Caco-2 (cell line): ENCODE measurements at regions of chr6 and their contacts with region 1.

Region 1: GRCh38 chr6:83958241-83958685 is 75.3 kb upstream of the MRAP2 start:
- DNase-seq: peak in 1 of 2 experiments; percentile 5
- H3K4me3 ChIP-seq: no peak overlapping the region
- H3K4me3 Mint-ChIP-seq: no peak overlapping the region
- H3K27ac Mint-ChIP-seq: no peak overlapping the region
- H3K4me1 ChIP-seq: peaks cover 31% of the 10 kb centered on the region
- H3K4me1 Mint-ChIP-seq: peaks cover 13% of the 10 kb centered on the region
- H3K27me3 ChIP-seq: no peaks in the 10 kb centered on the region
- H3K27me3 Mint-ChIP-seq: no peaks in the 10 kb centered on the region
- CTCF ChIP-seq: no peak

Region 2: GRCh38 chr6:83974409-83975050 is 16.3 kb after region 1 on chr6:
- CTCF ChIA-PET with region 1: no interaction called
- POLR2A ChIA-PET with region 1: no interaction called
- intact Hi-C with region 1: no loop called
- DNase-seq: peak; percentile 15 to 43
- H3K4me3 ChIP-seq: no peak overlapping the region
- H3K4me3 Mint-ChIP-seq: peak overlapping the region; percentile 53
- H3K27ac Mint-ChIP-seq: no peak overlapping the region
- H3K4me1 ChIP-seq: peaks cover 22% of the 10 kb centered on the region
- H3K4me1 Mint-ChIP-seq: peaks cover 20% of the 10 kb centered on the region
- H3K27me3 ChIP-seq: no peaks in the 10 kb centered on the region
- H3K27me3 Mint-ChIP-seq: no peaks in the 10 kb centered on the region
- CTCF ChIP-seq: no peak

Region 3: DNA sequence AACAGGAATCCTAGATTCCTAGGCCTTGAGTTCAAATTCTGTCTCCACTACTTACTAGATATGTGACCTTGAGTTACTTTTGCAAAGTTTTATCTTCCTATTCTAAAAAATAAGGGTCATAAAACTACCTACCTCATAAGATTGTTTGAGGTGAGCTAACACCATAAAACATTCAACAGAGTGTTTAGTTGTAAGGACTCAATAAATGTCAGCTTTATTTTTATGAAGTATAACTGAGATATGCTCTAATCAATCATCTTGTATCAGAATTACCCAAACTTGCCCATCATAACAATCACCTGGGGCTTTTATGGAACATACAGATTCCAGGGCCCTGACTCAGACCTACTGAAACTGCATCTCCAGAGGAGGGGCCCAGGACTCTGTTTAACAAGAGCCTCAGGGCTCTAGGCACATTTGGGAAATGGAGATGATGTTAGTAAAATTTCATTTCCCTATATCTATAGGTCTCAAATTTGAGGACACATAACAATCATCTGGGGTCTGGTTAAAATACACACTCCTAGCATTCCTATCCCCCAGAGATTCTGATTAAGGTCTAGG is 39.8 kb after region 1 on chr6:
- CTCF ChIA-PET with region 1: no interaction called
- POLR2A ChIA-PET with region 1: no interaction called
- intact Hi-C with region 1: no loop called
- DNase-seq: no peak
- H3K4me3 ChIP-seq: no peak overlapping the region
- H3K4me3 Mint-ChIP-seq: no peak overlapping the region
- H3K27ac Mint-ChIP-seq: no peak overlapping the region
- H3K4me1 ChIP-seq: no peaks in the 10 kb centered on the region
- H3K4me1 Mint-ChIP-seq: no peaks in the 10 kb centered on the region
- H3K27me3 ChIP-seq: no peaks in the 10 kb centered on the region
- H3K27me3 Mint-ChIP-seq: peaks cover 6% of the 10 kb centered on the region
- CTCF ChIP-seq: no peak

Region 4: DNA sequence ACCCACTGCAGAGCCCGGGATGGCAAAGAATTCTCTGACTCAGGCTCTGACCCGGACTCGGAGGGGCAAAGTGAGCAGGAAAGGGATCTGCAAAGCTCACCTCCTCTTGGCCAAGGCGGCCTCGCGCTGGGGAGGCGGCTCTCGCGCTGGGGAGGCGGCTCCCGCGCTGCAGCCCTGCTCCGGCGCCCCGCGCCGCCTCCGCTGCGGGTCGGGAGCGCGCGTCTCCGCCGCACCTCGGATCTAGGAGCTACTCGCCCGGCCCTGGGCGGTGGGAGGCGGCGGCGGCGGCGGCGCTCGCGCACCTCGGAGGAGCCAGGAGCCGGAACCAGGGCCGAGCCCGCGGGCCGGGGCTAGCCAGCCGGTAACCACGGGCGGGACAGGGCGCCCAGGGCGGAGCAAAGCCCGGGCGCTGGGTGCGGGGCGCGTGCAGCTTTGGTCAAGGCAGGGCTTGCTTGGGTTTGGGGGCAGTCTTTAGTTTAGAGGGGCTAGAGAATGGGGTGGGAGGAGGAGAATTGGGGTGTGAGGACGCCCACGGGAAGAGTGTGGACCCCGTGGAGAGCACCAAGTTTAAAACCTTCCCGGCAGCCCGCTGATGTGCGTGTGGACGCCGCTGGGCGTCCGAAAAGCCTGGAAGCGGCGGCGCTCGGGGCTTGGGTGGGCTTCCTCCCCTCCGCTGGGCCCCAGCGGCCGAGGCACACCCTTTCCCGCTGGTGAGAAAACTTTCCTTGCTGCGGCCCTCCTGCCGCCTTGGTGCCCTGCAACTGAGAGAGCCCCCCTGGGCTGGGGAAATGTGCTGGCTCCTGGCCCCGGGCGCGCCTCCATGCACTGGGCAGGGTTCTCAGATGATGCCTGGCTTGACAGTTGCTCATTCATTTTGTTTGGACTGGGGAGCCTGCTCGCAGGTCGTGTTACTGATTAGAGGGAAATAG is 75.5 kb after region 1 on chr6 and contains the start of gene MRAP2:
- CTCF ChIA-PET with region 1: no interaction called
- POLR2A ChIA-PET with region 1: no interaction called
- intact Hi-C with region 1: loop called (anchors 10 kb)
- DNase-seq: peak; percentile 42 to 68
- H3K4me3 ChIP-seq: peak within 1 kb of the TSS; percentile 66
- H3K4me3 Mint-ChIP-seq: peak within 1 kb of the TSS; percentile 72
- H3K27ac Mint-ChIP-seq: no peak within 1 kb of the TSS
- H3K4me1 ChIP-seq: 0 out of 2 replicates have a peak, but pooled peaks cover 3% of the 10 kb centered on the region
- H3K4me1 Mint-ChIP-seq: peaks cover 12% of the 10 kb centered on the region
- H3K27me3 ChIP-seq: peaks cover 2% of the 10 kb centered on the region; the same call in 1 of the 2 replicates
- H3K27me3 Mint-ChIP-seq: no peaks in the 10 kb centered on the region
- CTCF ChIP-seq: no peak
- total RNA-seq, gene MRAP2: 1.4 and 1.8 TPM in 2 replicates

Region 5: GRCh38 chr6:84177241-84177640 is 219.0 kb after region 1 on chr6:
- CTCF ChIA-PET with region 1: no interaction called
- POLR2A ChIA-PET with region 1: no interaction called
- intact Hi-C with region 1: loop called (anchors 10 kb)
- DNase-seq: no peak
- H3K4me3 ChIP-seq: no peak overlapping the region
- H3K4me3 Mint-ChIP-seq: no peak overlapping the region
- H3K27ac Mint-ChIP-seq: no peak overlapping the region
- H3K4me1 ChIP-seq: peaks cover 19% of the 10 kb centered on the region
- H3K4me1 Mint-ChIP-seq: peaks cover 18% of the 10 kb centered on the region
- H3K27me3 ChIP-seq: no peaks in the 10 kb centered on the region
- H3K27me3 Mint-ChIP-seq: no peaks in the 10 kb centered on the region
- CTCF ChIP-seq: no peak